Thyroid gland (tissue), 4 donors: ENCODE measurements at regions of chr7 and their contacts with region 1.

Region 1: GRCh38 chr7:141014524-141015395 is at the start of gene MRPS33:
- DNase-seq: peak; percentile 96 to 97
- H3K4me3 ChIP-seq: peak within 1 kb of the TSS; percentile 37 to 49 (median 44)
- H3K27ac ChIP-seq: peak within 1 kb of the TSS; percentile 23 to 82 (median 82)
- H3K4me1 ChIP-seq: peaks cover 6 to 8% of the 10 kb centered on the region in 2 donors
- H3K27me3 ChIP-seq: no peaks in the 10 kb centered on the region
- CTCF ChIP-seq: peak in 3 of 6 experiments; percentile 23 to 62 (median 40)
- POLR2A ChIP-seq: peak in 1 of 2 donors; percentile 70
- total RNA-seq, gene MRPS33: 22.2 to 39.4 (median 28.5) TPM

Region 2: DNA sequence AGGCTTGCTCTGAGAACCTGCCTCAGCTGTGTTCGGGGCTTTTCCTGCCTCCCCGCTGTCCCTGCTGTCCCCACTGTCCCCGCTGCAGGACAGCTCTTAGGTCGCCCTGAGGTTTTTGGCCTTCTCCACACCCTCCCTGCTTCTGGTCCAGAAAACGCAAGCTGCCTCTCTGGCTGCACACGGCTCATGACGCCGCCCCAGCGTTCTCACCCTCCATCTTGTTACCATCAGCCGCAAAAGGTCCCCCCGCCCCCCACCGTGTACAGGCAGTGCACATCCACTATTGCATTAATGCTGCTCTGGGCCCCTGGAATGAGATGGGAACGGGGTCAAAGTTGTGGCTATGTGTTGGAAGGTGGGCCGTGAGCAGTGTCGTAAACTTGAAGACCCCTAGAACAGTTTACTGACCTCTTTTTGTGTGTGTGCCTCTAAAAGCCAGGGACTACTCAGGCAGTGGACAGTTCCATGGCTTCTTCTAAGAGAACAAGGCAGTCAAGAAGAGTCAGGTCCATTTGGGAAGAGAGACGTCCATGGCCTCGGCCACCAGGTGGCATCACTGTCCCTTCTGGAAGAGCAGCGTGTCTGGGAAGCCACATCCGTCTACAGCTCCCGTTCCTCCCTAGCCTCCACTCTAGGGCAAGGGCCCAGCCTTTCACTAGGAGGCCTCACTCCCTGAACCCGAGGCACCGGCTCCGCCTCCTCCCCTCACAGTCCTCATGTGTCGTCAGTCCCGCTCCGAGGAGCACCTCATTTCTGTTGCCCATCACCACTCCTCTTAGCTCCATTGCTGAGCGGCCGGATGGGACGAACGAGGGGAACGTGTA is 497.0 kb before region 1 on chr7:
- intact Hi-C with region 1: loop called (anchors 10 kb)
- DNase-seq: peak; percentile 86 to 89
- H3K4me3 ChIP-seq: no peak overlapping the region
- H3K27ac ChIP-seq: peak overlapping the region in 1 of 3 donors; percentile 15
- H3K4me1 ChIP-seq: peaks cover 0 to 3% of the 10 kb centered on the region in 2 donors
- H3K27me3 ChIP-seq: no peaks in the 10 kb centered on the region
- CTCF ChIP-seq: peak; percentile 47 to 85 (median 75)
- POLR2A ChIP-seq: no peak

Region 3: GRCh38 chr7:140673063-140673773 is 341.5 kb before region 1 on chr7:
- intact Hi-C with region 1: loop called (anchors 10 kb)
- DNase-seq: peak; percentile 84 to 86
- H3K4me3 ChIP-seq: peak overlapping the region; percentile 72 to 85 (median 73)
- H3K27ac ChIP-seq: peak overlapping the region; percentile 55 to 96 (median 89)
- H3K4me1 ChIP-seq: peaks cover 23 to 27% of the 10 kb centered on the region in 2 donors
- H3K27me3 ChIP-seq: no peaks in the 10 kb centered on the region
- CTCF ChIP-seq: no peak
- POLR2A ChIP-seq: peak; percentile 14 to 70

Region 4: DNA sequence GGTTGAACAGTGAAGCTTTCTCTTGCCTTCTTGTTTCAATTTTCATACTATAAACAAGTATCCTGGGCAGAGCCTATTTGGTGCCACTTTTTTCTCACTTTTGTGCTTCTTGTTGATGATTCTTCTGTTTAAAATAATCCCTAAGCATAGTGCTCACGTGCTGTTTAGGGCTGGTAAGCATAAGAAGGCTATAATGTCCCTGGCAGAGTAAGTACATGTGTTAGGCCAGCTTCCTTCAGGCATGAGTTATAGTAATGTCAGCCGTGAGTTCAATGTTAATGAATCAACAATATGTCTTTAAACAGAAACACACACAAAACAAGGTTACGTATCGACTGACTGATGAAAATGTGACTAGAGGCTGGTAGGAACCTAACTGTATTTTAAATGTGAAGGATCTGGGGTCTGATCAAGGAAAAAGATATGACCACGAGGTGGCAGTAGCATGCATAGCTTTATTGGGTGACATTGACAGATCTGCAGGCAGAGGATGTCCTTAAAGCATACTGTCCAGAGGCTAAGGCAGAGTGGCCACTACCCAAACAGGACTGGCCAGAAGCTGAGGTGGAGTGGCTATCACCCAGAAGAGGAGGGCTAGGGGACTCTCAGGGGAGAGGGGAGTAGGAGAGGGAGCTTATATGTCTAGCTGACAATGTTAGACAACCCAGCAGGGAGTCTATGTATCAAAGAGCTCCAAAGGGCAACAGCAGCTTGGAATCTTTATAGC is 203.8 kb before region 1 on chr7:
- intact Hi-C with region 1: loop called (anchors 5 kb)
- DNase-seq: peak; percentile 50 to 62
- H3K4me3 ChIP-seq: no peak overlapping the region
- H3K27ac ChIP-seq: no peak overlapping the region
- H3K4me1 ChIP-seq: no peaks in the 10 kb centered on the region
- H3K27me3 ChIP-seq: no peaks in the 10 kb centered on the region
- CTCF ChIP-seq: peak; percentile 10 to 75 (median 67)
- POLR2A ChIP-seq: no peak

Region 5: DNA sequence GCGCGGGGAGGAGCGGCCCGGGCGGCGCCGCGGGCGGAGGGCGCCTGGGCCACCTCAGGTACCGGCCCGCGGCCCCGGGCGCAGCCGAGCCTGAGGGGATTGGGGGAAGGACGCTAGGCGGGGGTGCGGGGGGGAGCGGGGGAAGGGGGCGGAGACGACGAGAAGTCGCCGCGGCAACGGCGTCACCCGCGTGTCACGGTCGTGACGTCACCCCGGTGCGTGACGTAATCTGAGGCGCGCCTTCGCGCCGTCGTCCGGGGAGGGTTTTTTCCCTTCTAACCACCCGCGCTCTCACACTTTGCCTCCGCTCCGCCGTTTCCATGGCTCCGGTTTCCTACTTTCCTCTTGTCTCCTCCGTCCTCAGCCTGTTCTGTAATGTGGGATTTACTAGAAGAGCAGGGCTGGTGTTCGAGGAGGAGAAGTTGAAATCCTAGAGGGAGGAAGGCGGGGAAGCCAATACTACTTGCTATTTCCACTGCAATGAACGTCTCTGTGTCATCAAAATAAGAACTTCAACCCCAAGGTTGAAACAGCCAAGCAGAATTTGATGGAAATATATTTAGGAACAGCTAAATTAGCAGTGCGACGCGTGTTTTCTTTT is 89.8 kb before region 1 on chr7 and contains the start of gene BRAF:
- intact Hi-C with region 1: loop called (anchors 5 kb)
- DNase-seq: peak; percentile 84 to 86
- H3K4me3 ChIP-seq: peak within 1 kb of the TSS; percentile 88 to 95 (median 95)
- H3K27ac ChIP-seq: peak within 1 kb of the TSS; percentile 98 to 99 (median 99)
- H3K4me1 ChIP-seq: peaks cover 12 to 15% of the 10 kb centered on the region in 2 donors
- H3K27me3 ChIP-seq: no peaks in the 10 kb centered on the region
- CTCF ChIP-seq: peak in 2 of 6 experiments; percentile 9 to 26
- POLR2A ChIP-seq: no peak
- total RNA-seq, gene BRAF: 71.5 to 135 (median 102) TPM

Region 6: GRCh38 chr7:141097430-141097829 is 82.7 kb after region 1 on chr7:
- intact Hi-C with region 1: no loop called
- DNase-seq: peak in 1 of 2 donors; percentile 24
- H3K4me3 ChIP-seq: no peak overlapping the region
- H3K27ac ChIP-seq: no peak overlapping the region
- H3K4me1 ChIP-seq: no peaks in the 10 kb centered on the region
- H3K27me3 ChIP-seq: no peaks in the 10 kb centered on the region
- CTCF ChIP-seq: no peak
- POLR2A ChIP-seq: no peak

Region 7: GRCh38 chr7:141291541-141291940 is 276.8 kb after region 1 on chr7:
- intact Hi-C with region 1: no loop called
- DNase-seq: no peak
- H3K4me3 ChIP-seq: no peak overlapping the region
- H3K27ac ChIP-seq: no peak overlapping the region
- H3K4me1 ChIP-seq: peaks cover 55 to 58% of the 10 kb centered on the region in 2 donors
- H3K27me3 ChIP-seq: no peaks in the 10 kb centered on the region
- CTCF ChIP-seq: no peak
- POLR2A ChIP-seq: no peak